ENCODE measurements at regions of chr2 and their contacts with region 1.

Region 1: DNA sequence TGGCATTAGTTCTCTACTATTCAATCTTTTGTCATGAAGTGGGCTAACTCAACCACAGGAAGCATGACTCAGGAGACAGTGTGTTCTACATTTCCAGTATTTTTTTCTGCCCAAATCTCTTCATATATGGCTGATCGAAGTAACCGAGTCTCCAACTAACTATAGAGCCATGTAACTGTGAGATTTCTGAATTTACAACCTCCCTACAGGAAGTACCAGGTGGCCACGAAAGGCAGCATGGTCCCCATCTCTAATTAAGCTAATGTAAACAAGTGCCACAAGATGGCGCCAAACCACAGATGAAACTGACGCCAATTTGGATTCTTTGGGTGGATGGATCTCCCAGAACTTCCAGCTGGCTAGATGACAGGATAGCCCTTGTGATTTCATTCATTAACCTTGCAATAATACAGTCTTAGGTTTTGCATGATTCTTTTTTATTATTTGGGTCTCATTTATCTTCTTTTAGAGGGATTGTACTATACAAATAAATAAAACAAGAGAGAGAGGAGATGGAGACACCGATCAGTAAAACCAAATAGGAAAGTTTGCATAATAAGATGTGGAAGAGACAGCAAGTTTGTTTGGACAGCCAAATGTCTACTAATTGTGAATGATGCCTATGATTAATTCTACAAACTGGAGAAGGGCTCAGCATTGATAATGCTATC is 18.3 kb upstream of the ARHGAP15 start:
- DNase-seq: peak; percentile 59 to 72 (median 67)
- H3K4me3 ChIP-seq: no peak overlapping the region
- H3K4me3 Mint-ChIP-seq: peak overlapping the region in 5 of 8 donors; percentile 17 to 53 (median 42)
- H3K27ac ChIP-seq: peak overlapping the region; percentile 33
- H3K27ac Mint-ChIP-seq: peak overlapping the region in 6 of 7 donors; percentile 63 to 89 (median 74)
- H3K4me1 ChIP-seq: peaks cover 20% of the 10 kb centered on the region
- H3K4me1 Mint-ChIP-seq: peaks cover 17 to 25% (median 21%) of the 10 kb centered on the region in 4 donors
- H3K27me3 ChIP-seq: no peaks in the 10 kb centered on the region
- H3K27me3 Mint-ChIP-seq: no peaks in the 10 kb centered on the region

Region 2: GRCh38 chr2:142778284-142778683 is 332.6 kb before region 1 on chr2:
- CTCF ChIA-PET with region 1: no interaction called
- POLR2A ChIA-PET with region 1: no interaction called
- intact Hi-C with region 1: no loop called
- DNase-seq: no peak
- H3K4me3 ChIP-seq: no peak overlapping the region
- H3K4me3 Mint-ChIP-seq: no peak overlapping the region
- H3K27ac ChIP-seq: no peak overlapping the region
- H3K27ac Mint-ChIP-seq: no peak overlapping the region
- H3K4me1 ChIP-seq: no peaks in the 10 kb centered on the region
- H3K4me1 Mint-ChIP-seq: no peaks in the 10 kb centered on the region
- H3K27me3 ChIP-seq: no peaks in the 10 kb centered on the region
- H3K27me3 Mint-ChIP-seq: no peaks in the 10 kb centered on the region

Region 3: DNA sequence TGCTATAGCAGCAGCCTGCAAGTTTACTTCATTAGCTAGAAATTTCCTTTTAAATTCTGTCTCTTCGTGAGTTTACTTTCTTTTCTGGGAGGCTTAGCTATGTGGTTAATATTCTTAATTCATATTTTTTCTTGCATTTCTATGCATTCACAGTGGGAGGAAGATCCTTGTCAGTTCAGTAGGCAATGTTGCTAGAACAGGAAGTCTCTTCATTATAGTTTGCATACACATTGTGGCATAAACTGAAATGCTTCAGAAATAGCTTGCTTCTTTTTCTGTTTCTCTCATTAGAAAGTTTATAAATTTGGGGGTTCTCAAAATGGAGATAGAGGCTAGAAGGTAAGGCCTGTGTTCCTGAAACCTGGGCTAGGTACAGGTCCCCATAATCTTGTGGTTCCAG is 10.2 kb after region 1 on chr2:
- CTCF ChIA-PET with region 1: interaction called, 49 read pairs
- POLR2A ChIA-PET with region 1: interaction called, 63 read pairs
- intact Hi-C with region 1: no loop called
- DNase-seq: no peak
- H3K4me3 ChIP-seq: no peak overlapping the region
- H3K4me3 Mint-ChIP-seq: peak overlapping the region in 7 of 8 donors; percentile 10 to 78 (median 27)
- H3K27ac ChIP-seq: no peak overlapping the region
- H3K27ac Mint-ChIP-seq: peak overlapping the region in 3 of 7 donors; percentile 18 to 69 (median 29)
- H3K4me1 ChIP-seq: peaks cover 44% of the 10 kb centered on the region
- H3K4me1 Mint-ChIP-seq: peaks cover 0 to 21% (median 9%) of the 10 kb centered on the region in 4 donors
- H3K27me3 ChIP-seq: no peaks in the 10 kb centered on the region
- H3K27me3 Mint-ChIP-seq: no peaks in the 10 kb centered on the region

Region 4: GRCh38 chr2:143140864-143141661 is 30.2 kb after region 1 on chr2:
- CTCF ChIA-PET with region 1: interaction called, 11 read pairs
- POLR2A ChIA-PET with region 1: no interaction called
- intact Hi-C with region 1: no loop called
- DNase-seq: no peak
- H3K4me3 ChIP-seq: peak overlapping the region in 1 of 2 donors; percentile 4
- H3K4me3 Mint-ChIP-seq: peak overlapping the region; percentile 63 to 88 (median 78)
- H3K27ac ChIP-seq: no peak overlapping the region
- H3K27ac Mint-ChIP-seq: peak overlapping the region in 5 of 7 donors; percentile 45 to 76 (median 62)
- H3K4me1 ChIP-seq: peaks cover 97% of the 10 kb centered on the region
- H3K4me1 Mint-ChIP-seq: peaks cover 77 to 98% (median 86%) of the 10 kb centered on the region in 4 donors
- H3K27me3 ChIP-seq: no peaks in the 10 kb centered on the region
- H3K27me3 Mint-ChIP-seq: no peaks in the 10 kb centered on the region

Region 5: DNA sequence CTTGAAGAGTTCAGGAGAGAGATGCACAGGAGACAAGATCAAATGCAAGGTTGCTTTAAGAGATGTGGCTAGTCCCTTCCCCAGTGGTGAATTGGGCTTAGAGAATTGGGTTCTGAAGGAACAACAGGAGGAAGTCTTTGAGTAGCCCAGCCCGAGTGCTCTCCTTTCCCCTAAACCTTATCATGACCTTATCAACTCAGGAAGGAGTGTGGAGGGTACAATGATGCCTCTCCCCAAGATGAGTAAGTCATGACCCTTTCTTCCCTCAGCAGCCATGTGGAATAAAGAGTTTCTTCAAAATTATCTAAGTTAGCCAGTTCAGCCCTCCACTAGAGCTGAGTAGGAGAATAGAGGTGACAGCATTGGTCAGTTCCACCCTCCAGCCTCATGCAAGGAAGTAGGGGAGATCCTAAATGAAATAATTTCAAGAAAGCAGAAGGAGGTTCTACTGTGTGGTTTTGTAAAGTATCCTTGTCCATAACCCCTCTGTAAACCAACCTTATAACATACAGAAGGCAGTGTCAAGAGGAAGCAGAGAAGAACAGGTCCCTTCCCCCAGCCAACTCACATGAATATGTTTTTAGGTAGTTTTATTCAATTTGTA is 106.7 kb after region 1 on chr2:
- CTCF ChIA-PET with region 1: interaction called, 97 read pairs
- POLR2A ChIA-PET with region 1: interaction called, 3 read pairs
- intact Hi-C with region 1: loop called (anchors 1 kb)
- DNase-seq: no peak
- H3K4me3 ChIP-seq: no peak overlapping the region
- H3K4me3 Mint-ChIP-seq: peak overlapping the region in 2 of 8 donors; percentile 9 to 24
- H3K27ac ChIP-seq: no peak overlapping the region
- H3K27ac Mint-ChIP-seq: peak overlapping the region; percentile 42 to 83 (median 70)
- H3K4me1 ChIP-seq: peaks cover 37% of the 10 kb centered on the region
- H3K4me1 Mint-ChIP-seq: peaks cover 42 to 61% (median 51%) of the 10 kb centered on the region in 4 donors
- H3K27me3 ChIP-seq: no peaks in the 10 kb centered on the region
- H3K27me3 Mint-ChIP-seq: no peaks in the 10 kb centered on the region

Measured in CD4-positive, alpha-beta memory T cell (primary cell).